RWPE1 (cell line): ENCODE measurements at regions of chr5 and their contacts with region 1.

Region 1: DNA sequence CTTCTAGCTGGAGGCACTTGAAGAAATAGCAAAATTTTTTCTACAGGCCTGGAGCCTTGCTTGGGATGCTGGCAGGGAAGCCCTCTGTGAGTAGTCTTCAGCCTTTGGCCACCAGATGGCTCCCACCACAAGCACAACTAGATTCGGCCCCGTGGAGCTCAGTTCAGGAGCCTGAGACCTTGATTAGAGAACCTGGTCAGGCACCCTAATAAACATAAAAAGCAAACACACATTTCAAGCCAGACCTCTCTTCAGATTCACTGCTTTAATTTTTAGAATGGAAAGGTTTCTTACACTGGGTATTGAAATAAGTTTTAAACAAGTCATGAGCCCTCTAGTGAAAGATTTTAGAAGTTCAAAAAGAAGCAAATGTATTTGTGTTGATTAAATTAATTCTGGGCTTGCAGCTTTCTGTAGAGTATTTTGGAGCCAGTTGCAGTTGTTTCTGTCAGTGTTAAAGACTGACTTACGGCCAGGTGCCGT is 41.4 kb downstream of the GLRX start:
- DNase-seq: peak; percentile 81
- H3K27ac ChIP-seq: no peak overlapping the region
- CTCF ChIP-seq: peak; percentile 95

Region 2: GRCh38 chr5:95641741-95642220 is 139.4 kb before region 1 on chr5:
- CTCF ChIA-PET with region 1: interaction called, 14 read pairs
- POLR2A ChIA-PET with region 1: no interaction called
- DNase-seq: no peak
- H3K27ac ChIP-seq: no peak overlapping the region
- CTCF ChIP-seq: no peak

Region 3: DNA sequence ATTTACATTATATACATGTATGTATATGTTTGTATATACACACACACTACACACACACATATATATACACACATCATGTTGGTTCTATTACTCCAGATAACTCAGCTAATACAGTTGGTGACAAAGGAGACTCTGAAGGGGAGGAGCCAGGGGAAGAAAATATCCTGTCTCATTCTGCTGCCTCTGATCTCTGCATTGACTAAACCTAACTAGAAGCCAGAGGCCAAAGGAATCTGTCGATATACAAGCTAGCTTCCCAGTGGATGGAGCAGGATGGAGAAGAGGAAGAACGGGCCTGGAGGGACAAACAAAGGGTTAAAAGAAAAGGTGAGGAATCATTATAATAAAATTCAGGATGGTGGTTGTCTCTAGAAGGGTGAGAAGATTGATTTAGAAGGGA is 63.7 kb before region 1 on chr5:
- CTCF ChIA-PET with region 1: no interaction called
- POLR2A ChIA-PET with region 1: no interaction called
- DNase-seq: no peak
- H3K27ac ChIP-seq: no peak overlapping the region
- CTCF ChIP-seq: no peak

Region 4: GRCh38 chr5:95770830-95771708 is 10.1 kb before region 1 on chr5:
- CTCF ChIA-PET with region 1: interaction called, 25 read pairs
- POLR2A ChIA-PET with region 1: no interaction called
- DNase-seq: peak; percentile 26
- H3K27ac ChIP-seq: no peak overlapping the region
- CTCF ChIP-seq: no peak

Region 5: GRCh38 chr5:95808686-95809413 is 27.7 kb after region 1 on chr5:
- CTCF ChIA-PET with region 1: interaction called, 7 read pairs
- POLR2A ChIA-PET with region 1: interaction called, 10 read pairs
- DNase-seq: no peak
- H3K27ac ChIP-seq: no peak overlapping the region
- CTCF ChIP-seq: no peak

Region 6: DNA sequence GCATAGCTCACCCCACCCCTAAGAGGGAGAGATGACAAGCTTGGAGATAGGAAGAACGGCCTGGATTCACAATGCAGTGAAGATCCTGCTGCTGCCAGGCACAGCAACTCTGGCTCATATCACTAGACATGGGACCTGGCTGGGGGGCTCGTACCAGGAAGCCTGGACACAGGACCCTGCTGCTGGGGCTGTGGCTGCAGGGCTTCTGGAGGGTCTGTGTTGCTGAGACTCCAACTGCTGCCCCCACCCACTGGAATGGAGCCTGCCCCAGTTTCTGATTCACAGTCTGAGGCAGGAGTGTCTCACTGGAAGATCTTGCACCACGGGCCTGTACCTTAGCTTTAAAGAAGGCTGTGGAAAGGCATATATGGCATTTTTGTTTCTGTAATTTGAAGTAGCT is 72.3 kb after region 1 on chr5:
- CTCF ChIA-PET with region 1: interaction called, 36 read pairs
- POLR2A ChIA-PET with region 1: no interaction called
- DNase-seq: no peak
- H3K27ac ChIP-seq: no peak overlapping the region
- CTCF ChIP-seq: no peak

Region 7: DNA sequence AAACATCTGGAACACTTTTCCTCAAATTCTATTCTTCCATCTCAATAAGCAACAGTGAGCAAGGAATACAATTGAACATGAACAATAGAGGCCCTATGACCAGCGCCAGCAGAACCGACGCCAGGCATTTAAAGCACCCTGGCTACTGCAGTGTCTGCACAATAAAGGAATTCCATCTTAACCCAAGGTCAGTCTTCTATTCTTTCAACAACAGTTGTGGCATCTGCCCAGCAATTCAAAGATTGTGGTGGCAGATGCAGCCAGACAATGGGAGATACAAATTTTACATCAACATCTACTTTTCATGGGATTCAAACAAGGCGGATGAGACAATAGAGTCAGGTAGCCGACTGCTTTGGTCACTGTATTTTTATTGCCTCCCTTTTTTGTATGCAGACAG is 114.6 kb after region 1 on chr5:
- CTCF ChIA-PET with region 1: no interaction called
- POLR2A ChIA-PET with region 1: no interaction called
- DNase-seq: no peak
- H3K27ac ChIP-seq: no peak overlapping the region
- CTCF ChIP-seq: no peak

Region 8: DNA sequence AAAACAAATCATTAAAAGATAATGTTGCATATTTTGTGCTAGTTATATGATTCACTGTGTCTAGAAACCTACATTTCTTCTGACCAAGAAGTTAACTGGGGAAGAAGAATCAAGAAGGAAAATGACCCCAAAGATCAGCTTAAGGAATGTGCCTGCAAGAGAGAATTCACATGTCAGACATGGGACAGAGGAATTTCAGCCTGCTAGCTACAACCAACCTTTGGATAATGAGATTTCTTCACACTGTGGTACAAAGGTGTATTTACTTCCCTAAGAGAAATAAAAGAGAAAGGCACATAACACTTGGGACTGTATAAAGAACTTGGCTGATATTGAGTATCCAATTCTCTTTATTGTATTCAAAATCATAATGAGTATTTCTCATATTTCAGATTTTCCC is 220.1 kb after region 1 on chr5:
- CTCF ChIA-PET with region 1: no interaction called
- POLR2A ChIA-PET with region 1: no interaction called
- DNase-seq: no peak
- H3K27ac ChIP-seq: no peak overlapping the region
- CTCF ChIP-seq: no peak

Region 9: GRCh38 chr5:96226941-96227552 is 445.9 kb after region 1 on chr5:
- CTCF ChIA-PET with region 1: no interaction called
- POLR2A ChIA-PET with region 1: no interaction called
- DNase-seq: peak; percentile 81
- H3K27ac ChIP-seq: peak overlapping the region; percentile 98
- CTCF ChIP-seq: no peak